ENCODE measurements at regions of chr10 and their contacts with region 1.

Region 1: DNA sequence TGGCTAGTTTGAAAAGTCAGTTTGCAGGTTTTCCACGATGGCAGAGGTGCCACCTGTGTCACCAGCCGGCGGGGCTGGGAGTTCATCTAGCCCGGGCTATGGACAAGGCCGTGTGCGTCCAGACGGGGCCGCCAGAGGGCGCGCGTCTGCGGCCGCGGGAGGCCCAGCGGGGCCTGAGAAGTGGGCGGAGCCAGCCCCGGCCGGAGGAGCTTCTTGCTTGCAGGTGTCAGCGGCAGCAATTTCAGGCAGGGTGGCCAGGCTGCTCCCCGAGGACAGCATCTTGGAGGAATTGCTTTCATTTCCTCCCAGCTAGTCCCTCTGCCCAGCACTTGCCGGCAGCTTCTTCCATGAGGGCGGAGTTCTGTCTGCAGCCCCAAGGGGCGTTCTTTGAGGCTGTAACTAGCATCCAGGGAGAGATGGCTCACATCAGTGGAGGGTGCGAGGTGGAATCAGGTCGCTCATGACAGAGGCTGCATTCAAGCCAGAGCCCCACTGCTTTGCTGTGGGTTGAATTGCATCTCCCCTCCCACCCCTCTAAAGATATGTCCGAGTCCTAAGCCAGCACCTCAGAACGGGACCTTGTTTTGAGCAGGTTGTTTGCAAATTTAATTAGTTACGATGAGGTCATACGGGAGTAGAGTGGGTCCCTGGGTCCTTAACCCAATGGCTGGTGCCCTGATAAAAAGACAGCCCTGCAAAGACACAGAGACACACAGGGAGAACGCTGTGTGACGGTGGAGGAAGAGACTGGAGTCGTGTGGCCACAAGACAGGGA is 85.9 kb upstream of the MKI67 start:
- DNase-seq: peak; percentile 87
- ATAC-seq: peak; percentile 80
- H3K4me3 Mint-ChIP-seq: peak overlapping the region; percentile 71
- H3K27ac Mint-ChIP-seq: peak overlapping the region; percentile 78
- H3K4me1 Mint-ChIP-seq: peaks cover 16% of the 10 kb centered on the region
- H3K27me3 Mint-ChIP-seq: peaks cover 10% of the 10 kb centered on the region

Region 2: GRCh38 chr10:128237710-128238109 is 25.6 kb after region 1 on chr10:
- CTCF ChIA-PET with region 1: no interaction called
- POLR2A ChIA-PET with region 1: no interaction called
- DNase-seq: no peak
- ATAC-seq: no peak
- H3K4me3 Mint-ChIP-seq: no peak overlapping the region
- H3K27ac Mint-ChIP-seq: no peak overlapping the region
- H3K4me1 Mint-ChIP-seq: no peaks in the 10 kb centered on the region
- H3K27me3 Mint-ChIP-seq: peaks cover 2% of the 10 kb centered on the region

Region 3: DNA sequence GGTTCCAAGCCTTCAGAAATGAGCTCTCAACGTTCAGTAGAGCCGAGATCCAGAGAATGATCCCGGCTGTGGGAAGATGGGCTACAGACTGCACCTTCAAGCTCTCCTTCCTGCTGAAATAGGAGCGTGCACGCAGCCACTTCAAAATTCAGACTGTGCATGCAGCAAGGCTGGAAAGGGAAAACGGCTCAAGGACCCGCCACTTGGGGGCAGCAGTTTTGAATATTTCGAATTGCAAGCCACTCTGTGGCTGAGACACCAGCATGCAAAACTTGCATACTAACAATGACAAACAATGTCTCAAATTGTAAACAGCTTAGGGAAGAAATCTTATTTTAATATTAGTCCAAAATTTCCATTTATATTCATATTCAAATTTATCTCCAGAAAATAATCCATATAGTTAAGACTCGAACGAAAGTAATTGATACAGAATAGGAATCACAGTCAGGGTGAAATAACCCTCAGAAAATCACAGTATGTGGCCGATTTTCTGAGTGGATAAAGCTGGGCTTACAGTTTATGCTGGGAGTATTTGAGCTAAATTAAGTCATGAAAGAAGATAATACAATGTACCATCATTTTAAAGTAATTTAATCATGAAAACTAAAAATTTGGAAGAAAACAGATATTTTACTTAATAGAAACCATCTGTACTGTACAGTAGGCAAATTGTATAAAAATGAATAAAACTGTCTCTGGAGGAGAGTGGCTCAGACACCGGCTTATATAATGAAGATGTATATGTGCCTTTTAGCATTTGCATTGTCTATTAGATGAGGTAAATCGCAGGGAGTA is 52.0 kb after region 1 on chr10:
- CTCF ChIA-PET with region 1: interaction called, 15 read pairs
- POLR2A ChIA-PET with region 1: no interaction called
- DNase-seq: peak; percentile 73
- ATAC-seq: no peak
- H3K4me3 Mint-ChIP-seq: no peak overlapping the region
- H3K27ac Mint-ChIP-seq: no peak overlapping the region
- H3K4me1 Mint-ChIP-seq: no peaks in the 10 kb centered on the region
- H3K27me3 Mint-ChIP-seq: peaks cover 28% of the 10 kb centered on the region